ENCODE measurements at regions of chr17 and their contacts with region 1.

Region 1: DNA sequence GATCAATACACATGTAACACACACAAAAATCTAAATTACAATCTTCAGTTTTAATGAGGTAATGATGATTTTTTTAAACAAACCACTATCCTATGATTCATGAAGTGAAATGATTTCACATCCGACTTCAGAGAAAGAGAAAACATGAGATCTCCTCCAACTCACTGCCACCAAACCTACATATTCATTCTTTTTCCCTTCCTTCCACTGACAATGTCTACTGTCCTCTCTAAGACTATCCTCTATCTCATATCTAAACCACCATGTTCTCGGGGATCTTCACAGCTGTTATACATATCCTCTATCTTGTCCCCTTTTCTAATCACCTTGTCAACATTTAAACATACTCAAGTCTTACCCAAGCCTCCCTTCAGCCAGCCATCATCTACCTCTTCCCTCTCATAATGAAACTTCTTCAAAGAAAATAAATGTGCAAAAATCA is 53.5 kb downstream of the SMURF2 start:
- DNase-seq: no peak
- H3K4me3 Mint-ChIP-seq: peak overlapping the region; percentile 32
- H3K27ac Mint-ChIP-seq: peak overlapping the region; percentile 78
- H3K4me1 Mint-ChIP-seq: peaks cover 22% of the 10 kb centered on the region
- H3K27me3 Mint-ChIP-seq: no peaks in the 10 kb centered on the region

Region 2: GRCh38 chr17:64572638-64573154 is 35.9 kb before region 1 on chr17:
- intact Hi-C with region 1: loop called (anchors 2 kb)
- DNase-seq: peak; percentile 64
- H3K4me3 Mint-ChIP-seq: peak overlapping the region; percentile 2
- H3K27ac Mint-ChIP-seq: peak overlapping the region; percentile 84
- H3K4me1 Mint-ChIP-seq: peaks cover 10% of the 10 kb centered on the region
- H3K27me3 Mint-ChIP-seq: no peaks in the 10 kb centered on the region

Region 3: GRCh38 chr17:64628641-64629040 is 20.1 kb after region 1 on chr17:
- intact Hi-C with region 1: loop called (anchors 1 kb)
- DNase-seq: peak; percentile 62
- H3K4me3 Mint-ChIP-seq: peak overlapping the region; percentile 47
- H3K27ac Mint-ChIP-seq: peak overlapping the region; percentile 88
- H3K4me1 Mint-ChIP-seq: peaks cover 23% of the 10 kb centered on the region
- H3K27me3 Mint-ChIP-seq: no peaks in the 10 kb centered on the region

Region 4: GRCh38 chr17:64648234-64648633 is 39.7 kb after region 1 on chr17:
- intact Hi-C with region 1: loop called (anchors 2 kb)
- DNase-seq: no peak
- H3K4me3 Mint-ChIP-seq: no peak overlapping the region
- H3K27ac Mint-ChIP-seq: peak overlapping the region; percentile 34
- H3K4me1 Mint-ChIP-seq: peaks cover 18% of the 10 kb centered on the region
- H3K27me3 Mint-ChIP-seq: no peaks in the 10 kb centered on the region

Measured in activated CD4-positive, alpha-beta T cell treated with anti-CD3 and anti-CD28 coated beads, Interleukin-2, amount 10 ng/mL, durations not matched to agents 24 days and 14 days (primary cell).